Aorta (tissue), 5 donors: ENCODE measurements at regions of chr15 and their contacts with region 1.

Region 1: DNA sequence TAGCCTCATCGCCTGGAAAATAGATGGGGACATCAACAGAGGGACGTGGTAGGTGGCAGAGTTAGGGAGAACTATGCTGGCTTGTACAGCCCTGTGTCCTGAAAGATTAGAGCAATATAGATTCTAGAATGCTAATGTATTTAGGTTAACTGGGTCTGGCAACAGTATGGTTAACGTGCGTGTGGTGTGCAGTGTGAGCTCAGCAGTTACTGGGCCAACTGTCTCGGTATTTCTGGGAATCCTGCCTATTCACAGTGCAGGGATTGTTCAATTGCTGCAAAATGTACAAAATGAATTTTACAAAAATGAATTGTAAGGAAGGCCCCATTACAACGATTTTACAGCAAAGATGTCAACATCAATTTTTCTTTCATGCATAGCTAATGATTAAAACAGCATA is 20.6 kb downstream of the MEIS2 start:
- DNase-seq: peak in 1 of 2 donors; percentile 46
- ATAC-seq: peak; percentile 80
- H3K4me3 ChIP-seq: no peak overlapping the region
- H3K27ac ChIP-seq: no peak overlapping the region
- H3K4me1 ChIP-seq: peaks cover 0 to 8% of the 10 kb centered on the region in 2 donors
- H3K27me3 ChIP-seq: no peaks in the 10 kb centered on the region

Region 2: DNA sequence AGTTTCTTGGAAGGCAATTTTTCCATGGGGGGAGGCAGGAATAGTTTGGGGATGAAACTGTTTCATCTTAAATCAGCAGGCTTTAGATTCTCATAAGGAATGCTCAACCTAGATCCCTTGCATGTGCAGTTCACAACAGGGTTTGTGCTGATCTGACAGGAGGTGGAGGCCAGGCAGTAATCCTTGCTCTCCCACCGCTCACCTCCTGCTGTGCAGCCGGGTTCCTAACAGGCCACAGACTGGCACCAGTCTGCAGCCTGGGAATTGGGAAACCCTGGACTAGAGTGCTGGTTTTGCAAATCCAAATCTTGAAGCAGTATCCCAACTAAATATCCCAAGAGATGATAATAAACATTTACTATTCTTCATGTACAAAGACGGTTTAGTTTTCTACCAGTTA is 598.4 kb after region 1 on chr15:
- intact Hi-C with region 1: loop called in 1 of 2 experiments (anchors 10 kb)
- DNase-seq: no peak
- ATAC-seq: no peak
- H3K4me3 ChIP-seq: no peak overlapping the region
- H3K27ac ChIP-seq: no peak overlapping the region
- H3K4me1 ChIP-seq: no peaks in the 10 kb centered on the region
- H3K27me3 ChIP-seq: no peaks in the 10 kb centered on the region